PC-9 (cell line): ENCODE measurements at regions of chr2 and their contacts with region 1.

Region 1: GRCh38 chr2:234823877-234824376 is 127.9 kb upstream of the SH3BP4 start:
- DNase-seq: peak; percentile 77 to 92
- H3K4me3 ChIP-seq: no peak overlapping the region
- H3K27ac ChIP-seq: peak overlapping the region; percentile 46; the same call in 1 of the 2 replicates
- H3K4me1 ChIP-seq: peaks cover 54% of the 10 kb centered on the region
- H3K27me3 ChIP-seq: no peaks in the 10 kb centered on the region
- CTCF ChIP-seq: no peak

Region 2: DNA sequence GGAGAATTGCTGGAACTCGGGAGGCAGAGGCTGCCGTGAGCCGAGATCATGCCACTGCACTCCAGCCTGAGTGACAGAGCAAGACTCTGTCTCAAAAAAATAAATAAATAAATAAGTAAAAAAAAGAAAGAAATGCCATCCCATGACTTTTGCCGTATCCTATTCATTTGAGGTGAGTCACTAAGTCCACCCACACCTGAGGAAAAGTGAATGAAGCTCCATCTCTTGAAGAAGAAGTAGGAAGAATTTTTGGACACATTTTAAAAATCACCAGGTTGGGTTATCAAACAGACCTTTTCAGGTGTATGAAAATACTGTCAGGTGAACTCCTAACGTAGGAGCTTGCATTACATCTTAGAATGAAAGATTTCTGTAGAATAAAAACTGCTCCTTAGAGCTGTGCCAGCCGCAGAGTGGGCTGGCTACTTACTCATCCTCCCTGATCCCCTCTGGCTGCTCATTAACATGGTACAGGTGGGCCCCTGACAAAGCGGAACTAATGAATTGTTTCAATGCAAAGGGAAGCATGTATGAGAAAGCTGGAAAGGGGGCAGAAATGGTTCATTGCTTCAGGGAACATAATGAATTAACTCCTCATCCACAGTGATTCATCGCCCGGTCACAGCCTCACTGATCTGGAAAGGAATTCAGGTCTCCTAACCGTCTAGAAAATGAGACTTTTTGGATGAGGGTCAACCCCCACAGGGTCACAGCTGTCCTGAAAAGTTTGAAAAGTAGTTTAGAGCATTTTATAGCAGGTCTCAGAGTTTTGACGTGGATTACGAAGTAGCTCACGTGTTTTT is 582.1 kb before region 1 on chr2:
- CTCF ChIA-PET with region 1: no interaction called
- POLR2A ChIA-PET with region 1: no interaction called
- intact Hi-C with region 1: loop called (anchors 10 kb)
- DNase-seq: peak; percentile 68 to 95
- H3K4me3 ChIP-seq: peak overlapping the region; percentile 36; the same call in 1 of the 2 replicates
- H3K27ac ChIP-seq: peak overlapping the region; percentile 91
- H3K4me1 ChIP-seq: peaks cover 68% of the 10 kb centered on the region
- H3K27me3 ChIP-seq: no peaks in the 10 kb centered on the region
- CTCF ChIP-seq: no peak

Region 3: GRCh38 chr2:234632527-234633391 is 191.2 kb before region 1 on chr2:
- CTCF ChIA-PET with region 1: no interaction called
- POLR2A ChIA-PET with region 1: no interaction called
- intact Hi-C with region 1: loop called (anchors 1 kb)
- DNase-seq: peak in 1 of 2 experiments; percentile 39
- H3K4me3 ChIP-seq: no peak overlapping the region
- H3K27ac ChIP-seq: 0 out of 2 replicates have a peak overlapping the region, but pooled peaks have one; percentile 27
- H3K4me1 ChIP-seq: peaks cover 32% of the 10 kb centered on the region
- H3K27me3 ChIP-seq: no peaks in the 10 kb centered on the region
- CTCF ChIP-seq: no peak

Region 4: GRCh38 chr2:234690569-234691213 is 133.2 kb before region 1 on chr2:
- CTCF ChIA-PET with region 1: no interaction called
- POLR2A ChIA-PET with region 1: interaction called, 5 read pairs
- intact Hi-C with region 1: loop called (anchors 1 kb)
- DNase-seq: peak in 1 of 2 experiments; percentile 43
- H3K4me3 ChIP-seq: no peak overlapping the region
- H3K27ac ChIP-seq: no peak overlapping the region
- H3K4me1 ChIP-seq: peaks cover 59% of the 10 kb centered on the region
- H3K27me3 ChIP-seq: no peaks in the 10 kb centered on the region
- CTCF ChIP-seq: no peak

Region 5: GRCh38 chr2:234881413-234882241 is 57.7 kb after region 1 on chr2:
- CTCF ChIA-PET with region 1: interaction called, 5 read pairs
- POLR2A ChIA-PET with region 1: no interaction called
- intact Hi-C with region 1: loop called (anchors 1 kb)
- DNase-seq: peak; percentile 88 to 92
- H3K4me3 ChIP-seq: peak overlapping the region; percentile 41; the same call in 1 of the 2 replicates
- H3K27ac ChIP-seq: peak overlapping the region; percentile 82
- H3K4me1 ChIP-seq: peaks cover 47% of the 10 kb centered on the region
- H3K27me3 ChIP-seq: no peaks in the 10 kb centered on the region
- CTCF ChIP-seq: peak; percentile 97